MCF 10A (cell line): ENCODE measurements at regions of chr1 and their contacts with region 1.

Region 1: DNA sequence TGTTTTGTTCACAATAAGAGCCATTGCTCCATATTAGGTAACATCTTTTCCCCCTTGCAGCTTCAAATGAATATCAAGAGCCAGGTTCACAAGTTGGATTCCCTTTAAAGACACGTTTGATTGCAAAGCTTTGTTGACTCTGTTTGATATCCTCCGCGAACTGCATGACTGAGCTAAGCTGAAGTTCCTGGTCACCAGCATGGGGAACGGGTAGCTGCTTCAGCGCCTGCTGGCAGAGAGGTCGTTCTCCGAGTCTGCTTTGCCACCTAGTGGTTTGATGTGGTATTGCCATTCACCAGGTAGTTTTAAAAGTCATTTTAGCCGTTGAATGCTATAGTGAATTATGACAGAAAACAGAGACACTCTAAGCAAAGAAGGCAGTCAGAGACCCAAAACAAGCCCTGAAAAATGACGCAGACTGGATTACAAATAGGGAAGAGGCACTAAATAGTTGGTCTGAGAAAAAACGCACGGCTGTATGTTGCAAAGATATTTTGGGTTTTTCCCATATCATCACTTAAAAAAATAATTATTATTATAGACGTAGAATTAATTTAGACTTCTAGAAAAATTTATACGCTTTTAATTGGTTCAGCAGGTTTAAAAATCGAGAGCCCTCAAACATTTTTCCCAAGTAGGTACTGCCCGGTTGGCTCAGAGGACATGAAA is 193.5 kb upstream of the FMN2 start:
- DNase-seq: peak; percentile 91
- H3K4me3 Mint-ChIP-seq: no peak overlapping the region
- H3K27ac Mint-ChIP-seq: peak overlapping the region; percentile 14
- H3K4me1 Mint-ChIP-seq: peaks cover 15% of the 10 kb centered on the region
- H3K27me3 Mint-ChIP-seq: no peaks in the 10 kb centered on the region
- CTCF ChIP-seq: peak; percentile 97

Region 2: DNA sequence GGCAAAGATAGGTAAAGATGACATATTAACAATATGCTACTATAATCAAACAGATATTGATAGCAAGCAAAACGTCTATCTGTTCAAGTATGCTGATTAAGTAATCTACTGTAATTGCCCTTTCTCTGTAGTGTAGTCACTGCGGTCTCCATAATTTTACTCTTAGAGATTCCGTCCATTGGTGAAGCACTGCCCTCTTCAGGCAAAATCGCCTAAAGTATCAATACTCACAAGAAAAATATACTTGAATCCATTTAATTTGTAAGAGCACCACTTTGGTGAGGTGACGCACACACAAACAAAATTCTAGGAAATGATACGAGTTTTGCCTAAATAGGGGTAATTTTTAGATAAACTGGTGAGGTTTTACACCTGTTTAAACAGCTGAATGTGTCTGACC is 946.4 kb before region 1 on chr1:
- CTCF ChIA-PET with region 1: interaction called, 9 read pairs
- POLR2A ChIA-PET with region 1: interaction called, 3 read pairs
- intact Hi-C with region 1: loop called (anchors 5 kb)
- DNase-seq: peak; percentile 82
- H3K4me3 Mint-ChIP-seq: no peak overlapping the region
- H3K27ac Mint-ChIP-seq: no peak overlapping the region
- H3K4me1 Mint-ChIP-seq: peaks cover 12% of the 10 kb centered on the region
- H3K27me3 Mint-ChIP-seq: no peaks in the 10 kb centered on the region
- CTCF ChIP-seq: peak; percentile 89

Region 3: DNA sequence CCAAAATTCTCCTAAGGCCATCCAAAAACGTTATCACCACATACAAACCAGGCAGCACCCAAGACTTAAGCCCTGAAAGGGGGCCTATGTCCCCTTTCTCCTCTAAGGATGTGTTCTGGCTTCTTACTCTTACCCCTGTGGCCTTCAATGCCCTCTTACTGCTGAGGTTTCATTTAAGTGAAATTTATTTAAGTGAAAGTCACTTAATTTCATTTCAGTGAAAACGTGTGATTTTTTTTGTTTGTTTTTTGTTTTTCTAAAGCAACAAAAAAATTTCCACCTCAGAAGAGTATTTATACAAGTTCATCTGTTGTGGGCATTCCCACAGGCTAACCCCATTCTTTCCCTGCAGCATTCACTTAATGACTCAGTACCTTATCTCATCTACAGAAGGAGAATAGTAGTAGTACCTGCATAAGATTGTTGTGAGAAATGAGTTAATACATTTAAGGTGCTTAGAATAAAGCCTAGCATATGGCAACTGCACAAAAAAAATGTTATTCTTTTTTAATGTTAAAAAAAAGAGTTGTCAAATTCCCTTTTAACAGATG is 291.3 kb before region 1 on chr1:
- CTCF ChIA-PET with region 1: no interaction called
- POLR2A ChIA-PET with region 1: no interaction called
- intact Hi-C with region 1: loop called (anchors 10 kb)
- DNase-seq: no peak
- H3K4me3 Mint-ChIP-seq: no peak overlapping the region
- H3K27ac Mint-ChIP-seq: no peak overlapping the region
- H3K4me1 Mint-ChIP-seq: no peaks in the 10 kb centered on the region
- H3K27me3 Mint-ChIP-seq: no peaks in the 10 kb centered on the region
- CTCF ChIP-seq: no peak

Region 4: DNA sequence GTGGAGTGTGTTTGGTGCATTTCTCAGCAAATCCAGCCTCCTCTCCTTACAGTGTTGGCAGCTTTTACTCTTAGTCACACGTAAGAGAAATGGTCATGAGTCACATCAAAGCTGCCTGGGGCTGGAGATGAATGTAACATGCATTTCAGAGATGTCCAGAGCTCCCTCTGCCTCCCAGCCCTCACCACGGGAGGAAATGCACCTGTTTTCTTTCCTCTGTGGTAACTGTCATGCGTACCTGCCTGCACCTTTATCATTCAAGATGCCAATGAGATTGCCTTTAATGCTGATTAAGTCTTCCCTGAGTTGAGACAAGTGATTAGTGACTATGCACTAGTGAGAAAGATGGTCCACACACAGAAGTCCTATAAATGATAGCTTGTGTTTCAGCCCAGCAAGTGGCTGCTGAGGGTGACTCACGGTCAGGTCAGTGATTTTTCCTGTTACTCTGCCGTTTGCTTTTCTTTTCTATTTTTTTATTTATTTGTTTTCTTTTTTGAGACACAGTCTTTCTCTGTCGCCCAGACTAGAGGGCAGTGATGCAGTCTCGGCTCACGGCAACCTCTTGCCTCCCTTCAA is 83.8 kb before region 1 on chr1:
- CTCF ChIA-PET with region 1: interaction called, 69 read pairs
- POLR2A ChIA-PET with region 1: interaction called, 7 read pairs
- intact Hi-C with region 1: loop called (anchors 1 kb)
- DNase-seq: peak; percentile 100
- H3K4me3 Mint-ChIP-seq: peak overlapping the region; percentile 38
- H3K27ac Mint-ChIP-seq: peak overlapping the region; percentile 8
- H3K4me1 Mint-ChIP-seq: peaks cover 36% of the 10 kb centered on the region
- H3K27me3 Mint-ChIP-seq: no peaks in the 10 kb centered on the region
- CTCF ChIP-seq: peak; percentile 4

Region 5: DNA sequence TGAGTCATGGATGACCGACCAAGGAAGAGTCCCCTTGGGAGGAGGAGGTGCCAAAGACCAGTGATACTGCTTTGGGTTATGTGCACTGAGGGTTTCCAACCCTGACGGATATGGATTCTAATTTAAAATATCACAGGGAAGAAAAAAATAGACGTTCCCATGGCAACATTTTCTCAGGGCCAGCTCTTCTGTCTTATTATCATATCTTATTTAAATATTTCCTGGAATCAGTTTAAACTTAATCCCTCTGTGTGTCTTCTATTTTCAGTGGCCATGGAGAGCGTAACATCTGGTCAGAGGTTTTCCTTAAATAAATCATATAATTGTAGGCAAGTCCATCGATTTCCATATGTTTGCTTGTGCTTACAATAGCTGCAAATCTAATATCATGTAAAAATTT is 11.9 kb before region 1 on chr1:
- CTCF ChIA-PET with region 1: interaction called, 26 read pairs
- POLR2A ChIA-PET with region 1: no interaction called
- intact Hi-C with region 1: no loop called
- DNase-seq: no peak
- H3K4me3 Mint-ChIP-seq: no peak overlapping the region
- H3K27ac Mint-ChIP-seq: no peak overlapping the region
- H3K4me1 Mint-ChIP-seq: no peaks in the 10 kb centered on the region
- H3K27me3 Mint-ChIP-seq: no peaks in the 10 kb centered on the region
- CTCF ChIP-seq: no peak

Region 6: DNA sequence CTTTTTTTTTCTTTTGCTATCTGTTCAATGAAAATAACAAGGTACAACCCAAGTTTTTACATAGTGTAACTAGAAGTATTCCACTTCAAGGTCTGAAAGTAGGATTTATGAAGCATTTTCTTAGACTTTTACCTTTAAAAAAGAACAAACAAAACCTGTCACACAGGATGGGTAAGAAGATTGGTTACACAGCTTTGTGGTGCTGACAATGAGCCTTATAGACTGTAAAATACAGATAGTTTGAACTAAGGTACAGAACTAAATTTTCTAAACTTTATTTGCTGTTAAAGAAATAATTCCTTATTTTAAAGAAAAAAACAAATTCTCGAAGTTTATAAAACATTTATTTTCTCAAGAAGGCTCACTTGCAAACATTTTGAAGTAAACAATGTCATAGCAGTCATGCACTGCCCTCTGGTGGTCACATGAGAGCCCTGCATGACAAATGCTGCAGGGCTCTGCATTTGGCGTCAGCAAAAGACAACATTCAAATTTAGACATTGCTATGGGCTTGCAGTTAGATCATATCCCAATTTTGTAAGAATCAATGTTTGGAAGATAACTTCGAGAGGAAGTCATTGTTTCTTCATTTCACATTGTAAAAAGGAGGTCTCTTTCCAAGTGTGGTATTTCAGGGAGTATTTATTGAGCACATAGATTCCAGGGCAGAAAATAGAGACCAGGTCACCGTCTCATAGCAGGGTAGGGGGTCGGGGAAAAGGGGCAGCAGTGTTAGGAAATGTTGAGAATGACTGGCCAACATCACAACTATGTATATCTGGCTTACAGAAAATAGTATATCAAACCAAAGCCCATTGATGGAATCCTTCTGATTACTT is 78.2 kb after region 1 on chr1:
- CTCF ChIA-PET with region 1: interaction called, 6 read pairs
- POLR2A ChIA-PET with region 1: no interaction called
- intact Hi-C with region 1: loop called (anchors 1 kb)
- DNase-seq: peak; percentile 85
- H3K4me3 Mint-ChIP-seq: no peak overlapping the region
- H3K27ac Mint-ChIP-seq: no peak overlapping the region
- H3K4me1 Mint-ChIP-seq: no peaks in the 10 kb centered on the region
- H3K27me3 Mint-ChIP-seq: peaks cover 31% of the 10 kb centered on the region
- CTCF ChIP-seq: peak; percentile 100